Left colon (tissue), 2 donors: ENCODE measurements at regions of chrX and their contacts with region 1.

Region 1: GRCh38 chrX:110847334-110847733 is 51.7 kb upstream of the CHRDL1 start:
- DNase-seq: no peak
- ATAC-seq: peak; percentile 69

Region 2: GRCh38 chrX:110450050-110450449 is 397.3 kb before region 1 on chrX:
- intact Hi-C with region 1: loop called in 1 of 2 experiments (anchors 2 kb)
- DNase-seq: peak; percentile 45 to 78
- ATAC-seq: peak; percentile 89

Region 3: GRCh38 chrX:110584083-110584482 is 263.3 kb before region 1 on chrX:
- intact Hi-C with region 1: no loop called
- DNase-seq: no peak
- ATAC-seq: no peak